Left ventricle myocardium inferior (tissue), 1 donor: ENCODE measurements at regions of chr1 and their contacts with region 1.

Region 1: GRCh38 chr1:14924455-14925331 is 228.9 kb upstream of the TMEM51 start:
- DNase-seq: peak; percentile 64
- H3K4me3 ChIP-seq: peak overlapping the region; percentile 86
- H3K27ac ChIP-seq: peak overlapping the region; percentile 74
- H3K4me1 ChIP-seq: peaks cover 26% of the 10 kb centered on the region
- H3K27me3 ChIP-seq: peaks cover 47% of the 10 kb centered on the region
- CTCF ChIP-seq: peak; percentile 43

Region 2: GRCh38 chr1:15028102-15028501 is 103.4 kb after region 1 on chr1:
- intact Hi-C with region 1: loop called (anchors 5 kb)
- DNase-seq: peak; percentile 39
- H3K4me3 ChIP-seq: no peak overlapping the region
- H3K27ac ChIP-seq: no peak overlapping the region
- H3K4me1 ChIP-seq: peaks cover 4% of the 10 kb centered on the region
- H3K27me3 ChIP-seq: no peaks in the 10 kb centered on the region
- CTCF ChIP-seq: no peak

Region 3: GRCh38 chr1:15355968-15356621 is 431.4 kb after region 1 on chr1:
- intact Hi-C with region 1: no loop called
- DNase-seq: no peak
- H3K4me3 ChIP-seq: no peak overlapping the region
- H3K27ac ChIP-seq: no peak overlapping the region
- H3K4me1 ChIP-seq: no peaks in the 10 kb centered on the region
- H3K27me3 ChIP-seq: no peaks in the 10 kb centered on the region
- CTCF ChIP-seq: no peak